Colonic mucosa (tissue), 4 donors: ENCODE measurements at regions of chr3 and their contacts with region 1.

Region 1: DNA sequence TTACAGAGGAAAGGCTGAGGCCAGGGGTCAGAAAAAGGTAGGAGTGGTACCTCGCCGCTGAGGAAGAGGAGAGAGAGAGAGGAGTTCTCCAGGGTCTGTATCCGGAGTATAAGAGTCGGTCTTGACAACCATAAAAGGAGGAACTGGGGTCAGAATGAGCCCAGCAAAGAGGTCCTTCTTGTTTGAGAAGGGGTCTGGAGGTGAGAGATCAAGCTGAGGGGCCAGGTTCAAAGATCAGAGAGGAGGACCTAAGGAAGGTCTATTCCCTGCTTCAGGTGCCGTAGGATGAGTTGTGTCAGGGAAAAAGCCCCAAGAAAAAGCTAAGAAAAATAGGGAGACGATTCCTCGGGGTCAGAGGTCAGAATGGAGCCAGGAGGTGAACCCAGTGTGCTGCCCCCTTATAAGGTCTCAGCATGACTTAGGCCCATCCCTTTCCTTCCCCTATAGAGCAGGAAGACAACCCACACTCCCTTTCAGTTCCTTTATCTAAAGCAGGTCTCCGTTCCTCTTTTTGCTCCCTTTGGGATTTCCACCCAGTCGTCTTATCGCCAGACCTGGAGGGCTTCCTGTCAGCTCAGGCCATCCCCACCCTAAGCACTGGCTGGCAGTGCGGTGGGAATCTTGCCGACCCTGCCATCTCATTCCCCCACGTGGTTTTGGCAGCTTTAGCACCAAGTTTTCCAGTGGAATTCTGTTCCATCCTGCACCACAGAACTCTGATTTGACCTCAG is 651 bp downstream of the MTMR14 start:
- DNase-seq: no peak
- H3K4me3 ChIP-seq: peak overlapping the region; percentile 97
- H3K27ac ChIP-seq: peak overlapping the region; percentile 72
- H3K4me1 ChIP-seq: peaks cover 7% of the 10 kb centered on the region
- H3K27me3 ChIP-seq: no peaks in the 10 kb centered on the region
- CTCF ChIP-seq: no peak

Region 2: DNA sequence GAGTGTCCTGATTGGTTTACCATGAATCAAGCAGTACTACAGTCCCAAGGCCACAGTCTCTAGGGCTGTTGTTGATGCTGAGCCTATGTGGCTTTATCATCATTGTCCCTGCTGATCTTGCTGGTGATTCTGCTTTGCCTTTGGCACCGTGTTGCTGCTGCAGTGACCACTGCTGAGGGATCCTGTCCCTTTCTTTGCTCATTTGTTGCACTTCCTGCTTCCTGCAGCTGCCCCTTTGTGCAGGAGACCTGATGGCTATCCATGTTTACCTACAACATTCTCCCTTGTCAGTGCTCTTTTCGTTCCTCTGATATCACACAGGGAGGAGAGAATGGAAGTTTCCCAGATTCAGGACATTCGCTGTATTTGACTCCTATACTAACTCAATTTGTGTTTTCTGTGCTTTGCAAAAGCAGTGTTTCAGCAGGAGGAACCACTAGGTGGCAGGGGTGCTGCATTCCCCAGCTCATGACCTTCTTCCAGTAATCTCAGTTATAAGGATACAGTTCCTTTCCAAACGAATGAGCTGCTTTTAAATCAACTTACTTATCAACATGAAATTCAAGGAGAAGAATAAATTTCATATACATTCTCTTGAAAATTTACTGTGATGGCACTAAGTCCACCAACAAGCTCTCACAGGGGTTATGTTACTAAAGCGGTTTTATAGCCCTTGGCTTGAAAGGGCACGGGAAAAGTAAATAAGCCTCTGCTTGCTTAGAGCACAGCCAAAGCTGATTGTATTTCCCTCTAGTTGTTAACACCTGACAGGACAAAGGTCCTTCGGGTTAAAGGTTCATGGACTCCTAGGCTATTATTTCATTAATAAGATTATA is 296.8 kb before region 1 on chr3:
- intact Hi-C with region 1: loop called (anchors 10 kb)
- DNase-seq: peak; percentile 79
- H3K4me3 ChIP-seq: no peak overlapping the region
- H3K27ac ChIP-seq: peak overlapping the region; percentile 75
- H3K4me1 ChIP-seq: peaks cover 5% of the 10 kb centered on the region
- H3K27me3 ChIP-seq: no peaks in the 10 kb centered on the region
- CTCF ChIP-seq: peak; percentile 72

Region 3: DNA sequence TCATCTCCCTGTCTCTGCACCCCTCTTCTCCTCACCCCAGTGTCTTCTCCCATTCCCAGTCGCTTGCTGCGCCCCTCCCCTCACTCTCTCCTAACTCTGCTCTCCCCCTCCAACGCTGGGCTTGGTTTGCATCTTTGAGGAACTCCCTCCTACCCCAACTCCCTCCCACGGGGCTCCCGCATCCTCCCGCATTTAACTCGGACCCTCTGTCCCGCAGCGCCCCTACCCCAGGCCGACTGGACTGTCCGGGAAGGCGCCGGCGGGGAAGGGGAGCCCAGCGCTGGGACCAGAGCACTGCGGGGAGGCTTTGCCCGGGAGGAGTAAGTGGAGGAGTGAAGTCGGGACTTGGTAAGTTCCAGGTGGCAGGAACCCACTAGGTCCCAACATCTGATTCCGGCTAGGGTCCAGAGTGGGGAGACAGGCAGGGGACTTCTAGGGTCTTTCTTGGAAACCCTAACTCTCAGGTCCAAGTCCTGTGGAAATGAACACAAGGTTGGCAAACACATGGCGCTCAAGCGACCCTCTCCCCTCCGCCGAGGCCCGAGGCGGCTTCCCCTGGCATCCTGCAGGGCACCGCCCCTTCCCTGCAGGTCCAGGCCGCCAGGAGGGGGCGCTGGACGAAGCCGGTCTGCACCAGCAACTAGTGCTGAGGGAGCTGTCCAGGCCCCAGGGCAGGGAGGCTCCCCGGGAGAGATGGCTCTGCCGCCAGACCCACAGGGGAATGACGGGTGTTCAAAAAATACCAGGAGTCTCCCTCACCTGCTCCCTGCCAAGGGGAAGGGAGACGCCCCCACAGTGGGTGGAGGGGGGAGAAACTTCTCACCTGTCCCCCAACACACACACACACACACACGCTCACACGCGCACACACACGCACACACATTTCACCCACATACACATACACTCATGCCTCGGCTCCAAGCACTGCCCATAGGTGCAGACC is 149.6 kb before region 1 on chr3:
- intact Hi-C with region 1: no loop called
- DNase-seq: peak; percentile 66
- H3K4me3 ChIP-seq: no peak overlapping the region
- H3K27ac ChIP-seq: no peak overlapping the region
- H3K4me1 ChIP-seq: no peaks in the 10 kb centered on the region
- H3K27me3 ChIP-seq: no peaks in the 10 kb centered on the region
- CTCF ChIP-seq: peak; percentile 64